CD4-positive, alpha-beta memory T cell (primary cell): ENCODE measurements at regions of chr22 and their contacts with region 1.

Region 1: GRCh38 chr22:30356449-30357235 is at the starts of genes CCDC157 and SF3A1:
- DNase-seq: peak; percentile 86 to 90 (median 89)
- H3K4me3 ChIP-seq: peak within 1 kb of the TSS; percentile 82 to 94
- H3K4me3 Mint-ChIP-seq: peak within 1 kb of the TSS; percentile 93 to 98 (median 97)
- H3K27ac ChIP-seq: peak within 1 kb of the TSS; percentile 96
- H3K27ac Mint-ChIP-seq: peak within 1 kb of the TSS; percentile 94 to 99 (median 98)
- H3K4me1 ChIP-seq: peaks cover 47% of the 10 kb centered on the region
- H3K4me1 Mint-ChIP-seq: peaks cover 25 to 60% (median 46%) of the 10 kb centered on the region in 4 donors
- H3K27me3 ChIP-seq: no peaks in the 10 kb centered on the region
- H3K27me3 Mint-ChIP-seq: no peaks in the 10 kb centered on the region
- total RNA-seq, gene CCDC157: 2.1 to 3.0 TPM
- total RNA-seq, gene SF3A1: 279 to 301 TPM

Region 2: GRCh38 chr22:30262917-30263741 is 93.5 kb before region 1 on chr22:
- CTCF ChIA-PET with region 1: interaction called, 4 read pairs
- POLR2A ChIA-PET with region 1: interaction called, 4 read pairs
- intact Hi-C with region 1: loop called (anchors 1 kb)
- DNase-seq: peak; percentile 64 to 76 (median 68)
- H3K4me3 ChIP-seq: peak overlapping the region in 1 of 2 donors; percentile 24
- H3K4me3 Mint-ChIP-seq: peak overlapping the region; percentile 70 to 83 (median 74)
- H3K27ac ChIP-seq: peak overlapping the region; percentile 36
- H3K27ac Mint-ChIP-seq: peak overlapping the region; percentile 61 to 90 (median 86)
- H3K4me1 ChIP-seq: peaks cover 48% of the 10 kb centered on the region
- H3K4me1 Mint-ChIP-seq: peaks cover 24 to 56% (median 42%) of the 10 kb centered on the region in 4 donors
- H3K27me3 ChIP-seq: no peaks in the 10 kb centered on the region
- H3K27me3 Mint-ChIP-seq: no peaks in the 10 kb centered on the region

Region 3: DNA sequence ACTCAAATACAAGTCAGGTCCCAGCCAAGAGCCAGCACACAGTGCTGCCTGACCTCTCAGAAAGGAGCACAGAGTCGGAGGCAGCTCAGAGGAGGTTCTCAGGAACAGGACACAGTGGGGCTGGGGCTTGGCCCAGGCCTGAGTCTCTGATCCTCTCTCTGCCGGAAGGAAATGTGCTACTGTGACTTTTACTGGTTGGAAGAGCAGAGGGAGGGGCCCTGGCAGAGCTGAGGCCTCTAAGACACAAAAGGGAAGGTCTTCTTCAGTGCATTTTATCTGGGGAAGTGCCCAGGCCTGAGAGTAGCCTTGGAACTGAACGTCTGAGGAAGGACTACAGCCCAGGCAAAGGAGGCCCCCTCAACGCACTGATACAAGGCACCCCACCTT is 51.1 kb before region 1 on chr22:
- CTCF ChIA-PET with region 1: interaction called, 4 read pairs
- POLR2A ChIA-PET with region 1: interaction called, 26 read pairs
- intact Hi-C with region 1: loop called (anchors 5 kb)
- DNase-seq: peak; percentile 62 to 72 (median 65)
- H3K4me3 ChIP-seq: peak overlapping the region; percentile 60 to 64
- H3K4me3 Mint-ChIP-seq: peak overlapping the region; percentile 67 to 86 (median 82)
- H3K27ac ChIP-seq: peak overlapping the region; percentile 64
- H3K27ac Mint-ChIP-seq: peak overlapping the region; percentile 81 to 98 (median 95)
- H3K4me1 ChIP-seq: peaks cover 100% of the 10 kb centered on the region
- H3K4me1 Mint-ChIP-seq: peaks cover 74 to 100% (median 91%) of the 10 kb centered on the region in 4 donors
- H3K27me3 ChIP-seq: no peaks in the 10 kb centered on the region
- H3K27me3 Mint-ChIP-seq: no peaks in the 10 kb centered on the region

Region 4: DNA sequence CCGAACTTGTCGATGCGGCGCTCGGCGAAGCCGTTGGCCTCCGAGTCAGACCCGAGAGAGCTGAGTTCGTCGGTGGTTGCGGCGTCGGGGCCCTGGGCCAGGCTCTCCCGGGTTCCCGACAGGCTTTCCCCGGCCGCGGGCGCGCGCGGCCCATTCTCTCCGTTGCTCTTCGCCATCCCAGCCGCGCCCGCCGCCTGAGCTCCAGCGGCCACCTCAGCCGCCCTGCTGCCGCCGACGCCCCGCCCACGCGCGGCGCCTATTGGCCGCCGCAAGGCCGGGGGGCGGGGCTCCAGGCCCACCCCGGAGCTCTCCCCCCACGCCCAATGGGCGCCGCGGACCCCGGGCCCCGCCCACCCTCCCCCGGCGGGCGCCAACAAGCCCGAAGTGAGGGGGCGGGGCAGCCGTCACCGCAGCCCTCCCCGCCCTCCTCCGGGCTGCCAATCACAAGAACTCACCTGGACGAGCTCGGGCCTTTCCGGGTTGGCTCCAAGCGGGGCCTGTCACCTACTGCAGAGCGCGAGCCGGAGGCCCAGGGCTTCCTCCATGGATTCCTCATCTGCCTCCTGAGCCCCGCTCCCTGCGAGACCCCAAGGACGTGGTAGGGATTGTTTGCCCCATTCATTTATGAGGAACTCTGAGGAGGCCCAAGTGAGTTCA is 29.8 kb before region 1 on chr22 and contains the start of gene TBC1D10A:
- CTCF ChIA-PET with region 1: interaction called, 3 read pairs
- POLR2A ChIA-PET with region 1: interaction called, 75 read pairs
- intact Hi-C with region 1: loop called (anchors 1 kb)
- DNase-seq: peak; percentile 92 to 94 (median 93)
- H3K4me3 ChIP-seq: peak within 1 kb of the TSS; percentile 76 to 78
- H3K4me3 Mint-ChIP-seq: peak within 1 kb of the TSS; percentile 90 to 95 (median 93)
- H3K27ac ChIP-seq: peak within 1 kb of the TSS; percentile 83
- H3K27ac Mint-ChIP-seq: peak within 1 kb of the TSS; percentile 90 to 97 (median 93)
- H3K4me1 ChIP-seq: peaks cover 50% of the 10 kb centered on the region
- H3K4me1 Mint-ChIP-seq: peaks cover 37 to 54% (median 45%) of the 10 kb centered on the region in 4 donors
- H3K27me3 ChIP-seq: no peaks in the 10 kb centered on the region
- H3K27me3 Mint-ChIP-seq: no peaks in the 10 kb centered on the region
- total RNA-seq, gene TBC1D10A: 62.2 to 76.8 TPM

Region 5: DNA sequence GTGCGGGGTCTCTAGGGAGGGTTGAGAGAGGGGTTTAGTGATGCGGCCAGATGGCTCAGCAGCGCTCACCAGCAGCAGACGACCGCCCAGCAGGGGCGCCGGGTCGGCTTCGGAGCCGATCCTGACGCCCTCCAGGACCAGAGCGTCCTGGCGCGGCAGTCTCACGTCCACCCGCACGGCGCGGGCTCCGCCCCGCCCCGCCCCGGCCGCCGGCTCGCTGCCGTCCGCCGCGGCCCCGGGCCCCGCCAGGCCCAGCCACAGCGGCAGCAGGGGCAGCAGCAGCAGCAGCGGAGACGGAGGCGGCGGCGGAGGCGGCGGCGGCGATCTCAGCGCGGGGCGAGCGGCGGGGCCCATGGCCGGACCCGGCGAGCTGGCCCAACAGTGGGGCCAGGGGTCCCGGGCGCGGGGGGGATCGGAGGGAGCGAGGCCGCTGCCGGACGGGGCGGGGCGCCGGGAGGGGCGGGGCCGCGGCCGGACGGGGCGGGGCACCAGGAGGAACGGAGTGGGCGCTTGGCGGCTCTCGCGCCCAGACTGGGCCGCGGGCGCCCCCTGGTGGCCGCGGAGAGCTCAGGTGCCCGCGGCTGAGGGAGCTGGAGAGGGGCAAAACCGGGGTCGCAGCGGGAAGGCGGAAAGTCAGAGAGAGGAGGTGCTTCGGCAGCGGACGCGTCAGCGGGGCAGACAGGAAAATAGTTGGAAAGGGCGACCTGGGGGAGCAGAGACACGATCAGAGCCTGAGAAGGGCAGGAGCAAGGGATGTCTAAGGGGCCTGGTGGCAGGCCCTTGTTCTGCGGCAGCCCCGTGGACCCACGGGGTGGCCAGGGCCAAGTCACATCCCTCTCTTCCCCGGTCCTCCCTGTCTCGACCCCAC is 30.6 kb after region 1 on chr22 and contains the start of gene RNF215:
- CTCF ChIA-PET with region 1: interaction called, 4 read pairs
- POLR2A ChIA-PET with region 1: interaction called, 8 read pairs
- intact Hi-C with region 1: loop called (anchors 2 kb)
- DNase-seq: peak; percentile 66 to 85 (median 79)
- H3K4me3 ChIP-seq: no peak within 1 kb of the TSS
- H3K4me3 Mint-ChIP-seq: peak within 1 kb of the TSS; percentile 63 to 84 (median 79)
- H3K27ac ChIP-seq: no peak within 1 kb of the TSS
- H3K27ac Mint-ChIP-seq: peak within 1 kb of the TSS in 5 of 7 donors; percentile 0 to 94 (median 84)
- H3K4me1 ChIP-seq: peaks cover 13% of the 10 kb centered on the region
- H3K4me1 Mint-ChIP-seq: peaks cover 9 to 15% (median 11%) of the 10 kb centered on the region in 4 donors
- H3K27me3 ChIP-seq: no peaks in the 10 kb centered on the region
- H3K27me3 Mint-ChIP-seq: peaks cover 0 to 2% of the 10 kb centered on the region in 2 donors
- total RNA-seq, gene RNF215: 6.1 to 6.6 TPM

Region 6: DNA sequence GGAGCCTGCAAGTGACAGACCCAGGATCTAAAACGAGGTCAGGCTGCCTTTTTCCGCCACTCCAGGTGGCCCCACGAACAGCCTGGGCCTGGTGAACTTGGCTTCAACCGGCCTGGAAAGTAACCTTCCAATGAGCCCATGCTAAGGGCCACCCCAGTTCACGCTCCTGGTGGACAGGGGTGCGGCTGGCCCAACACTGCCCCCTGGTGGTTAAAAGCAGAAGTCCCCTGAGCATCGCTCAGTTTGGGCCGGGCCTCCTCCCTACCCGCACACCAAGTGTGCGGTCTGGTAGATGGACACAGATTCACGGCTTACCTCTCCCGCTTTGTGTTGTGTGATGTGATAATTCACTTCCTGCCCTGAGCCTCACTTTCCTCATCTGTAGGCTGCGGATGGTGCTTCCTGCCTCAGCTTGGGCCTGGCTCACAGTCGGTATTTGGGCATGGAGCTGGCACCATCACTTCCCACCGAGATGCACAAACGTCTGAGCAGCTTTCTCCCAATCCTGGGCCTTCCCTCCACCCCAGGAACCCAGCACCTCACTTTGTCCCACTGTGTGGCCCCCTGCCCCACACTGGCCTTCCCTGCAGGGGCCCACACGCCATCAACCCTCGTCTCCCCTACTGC is 128.8 kb after region 1 on chr22:
- CTCF ChIA-PET with region 1: no interaction called
- POLR2A ChIA-PET with region 1: no interaction called
- intact Hi-C with region 1: no loop called
- DNase-seq: peak; percentile 70 to 77 (median 71)
- H3K4me3 ChIP-seq: no peak overlapping the region
- H3K4me3 Mint-ChIP-seq: no peak overlapping the region
- H3K27ac ChIP-seq: no peak overlapping the region
- H3K27ac Mint-ChIP-seq: peak overlapping the region in 2 of 7 donors; percentile 47 to 73
- H3K4me1 ChIP-seq: no peaks in the 10 kb centered on the region
- H3K4me1 Mint-ChIP-seq: peaks cover 0 to 3% (median 0%) of the 10 kb centered on the region in 4 donors
- H3K27me3 ChIP-seq: no peaks in the 10 kb centered on the region
- H3K27me3 Mint-ChIP-seq: peaks cover 1 to 4% of the 10 kb centered on the region in 2 donors

Region 7: DNA sequence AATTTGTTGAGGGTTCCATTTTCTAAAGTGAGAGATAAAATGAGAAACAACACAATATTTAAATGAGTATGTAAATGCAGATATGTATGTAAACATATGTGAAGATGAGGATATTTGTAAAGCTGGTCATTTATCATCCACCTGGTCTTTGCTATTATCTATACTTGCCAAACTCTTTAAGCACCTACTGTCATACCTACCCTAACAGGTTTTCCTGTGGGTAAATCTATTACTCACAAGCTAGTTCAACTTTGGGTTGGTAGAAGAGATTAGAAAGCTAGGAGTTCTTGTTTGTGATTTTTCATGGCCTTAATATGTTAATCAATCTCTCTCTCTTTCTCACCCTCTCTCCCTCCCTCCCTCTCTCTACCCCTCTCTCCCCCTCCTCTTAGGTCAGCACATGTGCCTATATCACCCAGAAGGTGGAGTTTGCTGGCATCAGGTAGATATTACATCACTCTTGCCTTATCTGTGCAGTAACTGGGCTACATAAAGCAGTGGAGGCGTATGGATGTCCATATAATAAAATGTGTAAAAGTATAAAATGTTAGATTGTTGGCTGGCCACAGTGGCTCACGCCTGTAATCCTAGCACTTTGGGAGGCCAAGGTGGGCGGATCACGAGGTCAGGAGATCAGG is 1411.9 kb after region 1 on chr22:
- CTCF ChIA-PET with region 1: no interaction called
- POLR2A ChIA-PET with region 1: no interaction called
- intact Hi-C with region 1: no loop called
- DNase-seq: no peak
- H3K4me3 ChIP-seq: no peak overlapping the region
- H3K4me3 Mint-ChIP-seq: no peak overlapping the region
- H3K27ac ChIP-seq: no peak overlapping the region
- H3K27ac Mint-ChIP-seq: no peak overlapping the region
- H3K4me1 ChIP-seq: no peaks in the 10 kb centered on the region
- H3K4me1 Mint-ChIP-seq: peaks cover 0 to 6% (median 1%) of the 10 kb centered on the region in 4 donors
- H3K27me3 ChIP-seq: no peaks in the 10 kb centered on the region
- H3K27me3 Mint-ChIP-seq: no peaks in the 10 kb centered on the region